ENCODE measurements at regions of chr17 and their contacts with region 1.

Region 1: DNA sequence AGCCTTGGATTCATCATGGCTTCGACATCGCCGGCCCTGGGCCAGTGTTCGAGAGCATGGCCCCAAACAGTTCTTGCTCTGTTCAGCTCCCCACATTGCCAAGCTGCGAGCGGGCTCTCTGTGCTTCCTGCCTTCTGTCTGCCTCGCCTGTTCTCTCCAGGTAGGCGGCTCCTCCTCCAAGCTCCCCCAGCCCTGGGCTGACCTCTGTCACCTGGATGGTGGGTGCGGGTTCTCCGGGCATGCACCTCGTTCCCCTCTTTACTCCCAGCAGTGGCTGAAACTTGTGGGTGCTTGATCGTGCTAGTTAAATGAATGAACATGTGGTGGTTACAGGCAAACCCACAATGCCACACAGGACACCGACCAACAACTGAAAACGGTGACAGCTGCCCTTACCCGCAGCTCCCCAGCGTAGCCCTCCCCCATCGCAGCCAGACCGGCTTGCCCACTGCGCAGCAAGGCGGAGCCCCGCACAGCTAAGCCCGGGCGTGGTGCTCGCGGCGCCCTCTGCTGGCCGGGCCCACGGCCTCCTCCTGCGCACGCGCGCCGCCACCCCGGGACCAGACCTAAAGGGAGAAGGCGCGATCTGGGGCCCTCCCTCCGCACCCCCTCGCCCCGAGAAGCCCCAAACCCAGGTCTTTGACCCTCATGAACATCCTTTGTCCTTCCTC is 23.0 kb upstream of the EIF1 start:
- DNase-seq: no peak
- H3K4me3 ChIP-seq: peak overlapping the region; percentile 55
- CTCF ChIP-seq: peak; percentile 90

Region 2: GRCh38 chr17:40362696-40363110 is 1303.0 kb before region 1 on chr17:
- CTCF ChIA-PET with region 1: interaction called, 12 read pairs
- POLR2A ChIA-PET with region 1: no interaction called
- DNase-seq: no peak
- H3K4me3 ChIP-seq: peak overlapping the region; percentile 59
- CTCF ChIP-seq: peak; percentile 92

Region 3: DNA sequence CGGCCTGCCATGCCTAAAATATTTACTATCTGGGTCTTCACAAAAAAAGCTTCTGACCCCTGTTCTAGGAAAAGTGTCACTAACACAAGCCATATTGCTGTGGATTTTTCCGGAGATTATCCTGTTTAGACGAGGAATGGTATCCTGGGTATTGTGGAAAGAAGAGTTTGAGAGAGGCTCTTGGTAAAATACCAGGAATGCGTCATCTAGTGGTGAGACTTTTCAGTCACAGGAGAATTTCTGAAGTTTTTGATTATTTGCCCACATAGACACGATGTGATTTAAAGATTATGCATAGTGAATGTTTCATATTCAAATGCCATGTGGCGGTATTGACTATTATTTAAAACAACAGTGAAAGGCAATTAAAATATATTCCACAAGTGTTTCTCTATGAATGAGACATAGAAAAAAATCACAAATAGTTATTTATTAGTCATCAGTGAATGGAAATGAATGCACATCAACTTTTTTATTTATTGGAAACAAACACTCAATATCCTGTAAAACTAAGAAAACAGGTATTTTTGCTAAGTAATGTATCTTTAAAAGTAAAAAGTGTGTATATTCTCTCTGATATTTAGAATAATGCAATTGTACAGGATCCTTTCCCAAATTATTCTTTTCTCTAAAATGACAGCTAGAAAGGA is 873.8 kb before region 1 on chr17:
- CTCF ChIA-PET with region 1: interaction called, 13 read pairs
- POLR2A ChIA-PET with region 1: no interaction called
- DNase-seq: no peak
- H3K4me3 ChIP-seq: no peak overlapping the region
- CTCF ChIP-seq: peak; percentile 48

Region 4: DNA sequence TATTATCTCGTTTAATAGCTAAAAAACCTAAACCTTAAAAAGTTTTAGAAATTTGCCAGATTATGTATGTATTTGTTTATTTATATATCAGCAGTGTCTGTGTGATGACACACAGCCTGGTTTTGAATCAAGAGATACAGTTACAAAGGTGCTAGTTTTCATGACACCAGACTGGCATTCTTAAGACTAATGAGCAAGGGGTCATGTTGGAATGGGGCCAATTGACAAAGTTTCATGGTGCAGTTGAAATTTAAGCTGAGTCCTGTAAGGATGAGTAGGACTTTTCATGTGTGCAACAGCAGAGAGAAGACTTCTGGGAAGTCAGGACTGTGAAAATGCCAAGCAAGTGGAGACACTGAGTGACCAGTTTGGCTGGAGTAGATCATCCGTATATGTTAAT is 840.1 kb before region 1 on chr17:
- CTCF ChIA-PET with region 1: interaction called, 14 read pairs
- POLR2A ChIA-PET with region 1: no interaction called
- DNase-seq: no peak
- H3K4me3 ChIP-seq: no peak overlapping the region
- CTCF ChIP-seq: no peak

Region 5: GRCh38 chr17:40909351-40909750 is 756.4 kb before region 1 on chr17:
- CTCF ChIA-PET with region 1: interaction called, 39 read pairs
- POLR2A ChIA-PET with region 1: no interaction called
- DNase-seq: peak; percentile 93
- H3K4me3 ChIP-seq: no peak overlapping the region
- CTCF ChIP-seq: peak; percentile 64

Region 6: DNA sequence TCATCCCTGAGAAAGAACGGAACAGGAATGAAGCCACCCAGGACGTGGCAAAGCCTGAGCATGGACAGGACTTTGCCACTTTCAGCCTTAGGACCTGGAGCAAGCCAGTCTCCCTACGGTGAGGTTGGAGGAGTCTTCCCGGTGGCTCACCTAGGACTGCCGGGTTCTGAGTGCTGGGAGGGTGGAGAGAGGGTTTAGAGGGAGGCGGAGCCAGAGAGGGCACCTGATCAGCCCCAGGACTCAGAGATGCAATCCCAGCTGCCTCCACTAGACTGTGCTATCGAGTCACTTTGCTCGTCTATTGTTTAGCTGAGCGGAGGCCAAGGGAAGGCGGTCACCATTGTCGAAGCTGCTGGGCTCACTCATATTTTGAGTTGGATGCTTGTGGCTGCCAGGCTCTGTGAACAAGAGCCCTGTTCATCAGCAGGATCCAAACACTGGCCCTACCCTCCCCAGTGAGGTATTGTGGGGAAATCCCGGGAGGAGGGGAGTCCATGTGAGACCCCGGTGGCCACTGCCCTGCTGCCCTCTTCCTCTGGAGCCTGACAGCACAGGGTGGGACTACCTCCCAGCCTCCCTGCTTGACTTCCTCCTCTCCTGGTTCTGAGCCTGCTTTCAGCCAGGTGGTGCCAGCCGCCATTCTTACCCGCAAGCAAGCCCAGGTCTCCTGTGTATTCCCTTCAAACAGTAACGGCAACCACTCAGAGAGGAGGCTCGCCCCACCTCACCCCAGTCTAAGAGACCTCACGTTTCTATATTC is 86.0 kb before region 1 on chr17:
- CTCF ChIA-PET with region 1: interaction called, 38 read pairs
- POLR2A ChIA-PET with region 1: no interaction called
- DNase-seq: no peak
- H3K4me3 ChIP-seq: no peak overlapping the region
- CTCF ChIP-seq: peak; percentile 83

Region 7: GRCh38 chr17:41705271-41705991 is 39.7 kb after region 1 on chr17:
- CTCF ChIA-PET with region 1: no interaction called
- POLR2A ChIA-PET with region 1: no interaction called
- DNase-seq: no peak
- H3K4me3 ChIP-seq: no peak overlapping the region
- CTCF ChIP-seq: no peak